Gastrocnemius medialis (tissue), 4 donors: ENCODE measurements at regions of chr20 and their contacts with region 1.

Region 1: GRCh38 chr20:25437153-25437581 is 29.7 kb downstream of the GINS1 start:
- DNase-seq: no peak
- ATAC-seq: no peak
- H3K4me3 ChIP-seq: no peak overlapping the region
- H3K27ac ChIP-seq: no peak overlapping the region
- H3K4me1 ChIP-seq: no peaks in the 10 kb centered on the region
- H3K27me3 ChIP-seq: no peaks in the 10 kb centered on the region
- CTCF ChIP-seq: no peak
- POLR2A ChIP-seq: no peak

Region 2: DNA sequence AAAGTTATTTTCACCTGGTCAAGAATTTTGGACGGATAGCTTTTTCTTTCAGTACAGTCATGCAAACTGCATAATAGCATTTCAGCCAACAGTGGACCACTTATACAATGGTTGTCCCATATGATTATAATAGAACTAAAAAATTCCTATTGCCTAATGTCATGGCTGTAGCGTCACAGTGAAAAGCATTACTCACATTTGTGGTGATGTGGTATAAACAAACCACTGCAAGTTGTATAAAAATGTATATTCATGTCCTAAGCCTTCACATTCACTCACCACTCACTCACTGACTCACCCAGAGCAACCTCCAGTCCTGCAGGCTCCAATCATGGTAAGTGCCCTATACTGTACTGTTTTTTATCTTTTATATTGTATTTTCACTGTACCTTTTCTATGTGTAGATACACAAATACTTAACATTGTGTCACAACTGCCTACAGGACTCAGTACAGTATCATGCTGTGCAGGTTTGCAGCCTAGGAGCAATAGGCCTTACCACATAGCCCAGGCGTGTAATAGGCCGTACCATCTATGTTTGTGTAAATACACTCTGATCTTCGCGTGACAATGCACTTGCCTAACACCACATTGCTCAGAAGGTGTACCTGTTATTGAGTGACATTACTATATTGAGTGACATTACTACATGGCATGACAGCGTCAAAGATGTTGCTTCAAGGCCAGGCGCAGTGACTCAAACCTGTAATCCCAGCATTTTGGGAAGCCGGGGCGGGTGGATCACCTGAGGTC is 64.4 kb before region 1 on chr20:
- in situ Hi-C with region 1: loop called in 1 of 4 experiments (anchors 10 kb)
- intact Hi-C with region 1: no loop called
- DNase-seq: no peak
- ATAC-seq: no peak
- H3K4me3 ChIP-seq: no peak overlapping the region
- H3K27ac ChIP-seq: no peak overlapping the region
- H3K4me1 ChIP-seq: no peaks in the 10 kb centered on the region
- H3K27me3 ChIP-seq: no peaks in the 10 kb centered on the region
- CTCF ChIP-seq: no peak
- POLR2A ChIP-seq: no peak